MCF 10A (cell line): ENCODE measurements at regions of chr11 and their contacts with region 1.

Region 1: DNA sequence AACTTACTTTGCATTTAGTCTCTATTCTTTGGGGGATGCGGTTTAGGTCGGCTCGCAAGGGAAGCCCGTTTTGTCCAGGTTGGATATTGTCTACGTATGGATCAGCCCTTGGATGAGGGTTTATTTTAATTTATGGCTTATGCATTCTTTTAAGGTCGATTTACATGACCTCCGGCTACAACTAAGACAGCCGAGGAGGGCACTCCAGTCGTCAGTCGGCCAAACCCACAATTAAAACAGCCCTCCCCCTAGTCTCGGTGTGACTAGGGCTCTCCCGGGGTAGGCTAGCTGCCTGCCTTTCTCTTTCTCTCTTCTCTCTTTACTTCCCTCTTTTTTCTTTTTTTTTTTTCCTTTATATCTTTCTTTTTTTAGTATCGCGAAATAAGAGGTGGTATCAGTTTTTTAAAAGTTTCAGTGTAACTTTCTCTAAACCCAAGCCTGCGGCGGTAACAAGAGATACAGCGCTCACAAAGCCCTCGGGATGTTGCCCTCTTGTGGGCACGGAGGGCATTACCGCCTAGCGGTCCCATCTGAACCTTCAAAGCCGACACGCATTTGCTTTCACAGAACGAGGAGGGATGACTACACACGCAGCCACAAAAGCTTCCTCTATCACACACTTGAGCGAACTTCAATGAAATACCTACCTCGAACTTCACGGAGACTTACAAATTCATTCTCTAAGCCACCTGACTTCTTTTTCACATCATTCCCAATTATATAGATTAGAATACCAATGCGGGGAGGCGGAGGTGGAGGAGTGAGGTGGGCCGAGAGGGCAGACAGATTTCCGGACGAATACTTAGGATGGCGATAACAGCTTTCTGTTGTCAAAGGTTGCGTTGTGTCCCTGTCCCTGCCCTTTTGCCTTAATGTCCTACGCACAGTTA is 132.3 kb upstream of the C11orf58 start:
- DNase-seq: peak; percentile 91
- H3K4me3 Mint-ChIP-seq: no peak overlapping the region
- H3K27ac Mint-ChIP-seq: no peak overlapping the region
- H3K4me1 Mint-ChIP-seq: no peaks in the 10 kb centered on the region
- H3K27me3 Mint-ChIP-seq: peaks cover under 1% of the 10 kb centered on the region
- CTCF ChIP-seq: peak; percentile 91

Region 2: DNA sequence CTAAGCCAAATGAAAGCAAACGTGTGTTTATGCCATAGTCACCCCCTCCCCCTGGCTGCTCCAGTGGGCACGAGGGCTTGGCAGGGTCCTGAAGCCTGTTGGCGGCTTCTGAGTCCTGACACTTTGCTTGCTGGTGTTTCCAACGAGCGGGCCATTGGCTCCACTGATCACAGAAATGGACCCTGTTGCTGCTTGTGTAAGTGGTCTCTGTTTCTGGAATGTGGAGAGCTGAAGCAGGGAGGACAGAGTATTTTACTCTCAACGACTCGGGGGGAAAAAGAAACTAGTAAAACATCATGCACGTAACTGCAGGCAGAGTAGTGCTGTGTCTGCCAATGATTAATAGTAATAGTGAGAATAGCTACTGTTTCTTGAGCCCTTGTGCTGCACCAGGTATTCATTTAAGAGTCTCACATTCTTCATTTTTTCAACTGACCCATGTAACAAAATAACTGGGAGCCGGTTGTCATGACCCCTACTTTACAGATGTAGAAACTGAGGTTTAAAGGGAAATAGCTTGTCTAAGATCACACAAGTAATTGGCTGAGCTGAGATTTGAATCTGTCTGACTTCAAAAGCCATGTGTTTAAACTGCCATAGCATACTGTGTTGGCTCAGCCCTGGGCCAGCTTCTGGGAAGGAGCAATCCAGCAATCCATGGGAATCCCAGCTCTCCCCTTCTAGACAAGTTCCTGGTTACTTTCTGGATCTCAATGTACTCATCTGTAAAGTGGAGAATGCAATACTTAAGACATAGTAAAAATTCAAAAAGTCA is 964.7 kb before region 1 on chr11:
- CTCF ChIA-PET with region 1: no interaction called
- POLR2A ChIA-PET with region 1: no interaction called
- intact Hi-C with region 1: no loop called
- DNase-seq: no peak
- H3K4me3 Mint-ChIP-seq: no peak overlapping the region
- H3K27ac Mint-ChIP-seq: no peak overlapping the region
- H3K4me1 Mint-ChIP-seq: no peaks in the 10 kb centered on the region
- H3K27me3 Mint-ChIP-seq: peaks cover 18% of the 10 kb centered on the region
- CTCF ChIP-seq: no peak

Region 3: DNA sequence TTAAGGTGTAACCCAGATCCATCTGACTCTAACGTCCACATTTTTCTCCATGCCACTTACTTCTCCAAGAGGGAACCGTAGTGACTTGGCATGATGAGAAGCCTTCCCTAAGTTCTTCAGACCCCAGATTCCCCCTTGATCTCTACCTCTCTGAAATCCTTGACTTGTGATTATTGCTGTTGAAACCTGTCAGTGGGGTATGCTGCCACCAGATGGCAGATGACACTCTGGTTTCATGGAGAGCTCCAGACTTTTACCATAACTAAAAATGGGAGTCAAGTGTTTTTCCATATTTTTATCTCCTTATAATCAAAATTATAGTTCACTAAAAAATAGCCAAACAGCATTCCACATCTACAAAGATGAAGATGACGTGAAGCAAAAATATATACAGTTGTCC is 754.0 kb before region 1 on chr11:
- CTCF ChIA-PET with region 1: interaction called, 5 read pairs
- POLR2A ChIA-PET with region 1: interaction called, 4 read pairs
- intact Hi-C with region 1: loop called (anchors 1 kb)
- DNase-seq: peak; percentile 43
- H3K4me3 Mint-ChIP-seq: no peak overlapping the region
- H3K27ac Mint-ChIP-seq: no peak overlapping the region
- H3K4me1 Mint-ChIP-seq: no peaks in the 10 kb centered on the region
- H3K27me3 Mint-ChIP-seq: no peaks in the 10 kb centered on the region
- CTCF ChIP-seq: peak; percentile 56

Region 4: GRCh38 chr11:16043617-16044016 is 562.5 kb before region 1 on chr11:
- CTCF ChIA-PET with region 1: interaction called, 4 read pairs
- POLR2A ChIA-PET with region 1: interaction called, 5 read pairs
- intact Hi-C with region 1: loop called (anchors 5 kb)
- DNase-seq: no peak
- H3K4me3 Mint-ChIP-seq: no peak overlapping the region
- H3K27ac Mint-ChIP-seq: no peak overlapping the region
- H3K4me1 Mint-ChIP-seq: no peaks in the 10 kb centered on the region
- H3K27me3 Mint-ChIP-seq: no peaks in the 10 kb centered on the region
- CTCF ChIP-seq: no peak

Region 5: GRCh38 chr11:16252373-16252772 is 353.8 kb before region 1 on chr11:
- CTCF ChIA-PET with region 1: no interaction called
- POLR2A ChIA-PET with region 1: interaction called, 5 read pairs
- intact Hi-C with region 1: loop called (anchors 1 kb)
- DNase-seq: peak; percentile 16
- H3K4me3 Mint-ChIP-seq: no peak overlapping the region
- H3K27ac Mint-ChIP-seq: no peak overlapping the region
- H3K4me1 Mint-ChIP-seq: no peaks in the 10 kb centered on the region
- H3K27me3 Mint-ChIP-seq: no peaks in the 10 kb centered on the region
- CTCF ChIP-seq: peak; percentile 26

Region 6: GRCh38 chr11:16468735-16469453 is 137.2 kb before region 1 on chr11:
- CTCF ChIA-PET with region 1: no interaction called
- POLR2A ChIA-PET with region 1: interaction called, 43 read pairs
- intact Hi-C with region 1: no loop called
- DNase-seq: peak; percentile 47
- H3K4me3 Mint-ChIP-seq: peak overlapping the region; percentile 48
- H3K27ac Mint-ChIP-seq: peak overlapping the region; percentile 65
- H3K4me1 Mint-ChIP-seq: peaks cover 21% of the 10 kb centered on the region
- H3K27me3 Mint-ChIP-seq: no peaks in the 10 kb centered on the region
- CTCF ChIP-seq: no peak